GM12878 (cell line): ENCODE measurements at regions of chr9 and their contacts with region 1.

Region 1: DNA sequence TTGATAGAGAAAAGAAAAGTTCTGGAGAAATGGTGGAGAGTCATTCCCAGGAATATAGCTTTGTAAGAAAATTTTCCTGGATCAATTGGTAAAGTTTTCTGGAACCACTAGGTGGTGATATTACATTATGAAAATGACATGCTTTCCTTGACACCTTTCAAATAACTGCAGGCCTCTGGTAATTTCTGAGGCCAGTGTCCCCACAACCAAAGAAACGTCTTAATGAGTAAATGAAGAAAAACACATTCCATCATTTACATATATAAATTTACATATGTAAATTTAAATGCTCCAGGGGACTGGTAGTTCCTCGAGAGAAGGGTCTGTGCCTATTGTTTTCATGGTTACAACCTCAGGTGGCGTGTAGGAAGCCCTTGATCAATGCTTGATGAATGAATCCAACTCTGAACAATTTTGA is 17.2 kb upstream of the RGS3 start:
- DNase-seq: peak; percentile 25
- ATAC-seq: peak; percentile 80
- H3K4me3 ChIP-seq: no peak overlapping the region
- H3K27ac ChIP-seq: no peak overlapping the region
- H3K4me1 ChIP-seq: no peaks in the 10 kb centered on the region
- H3K27me3 ChIP-seq: no peaks in the 10 kb centered on the region
- CTCF ChIP-seq: peak; percentile 42 to 69 (median 50); a peak in 5 of 6 replicates
- EP300 ChIP-seq: no peak
- POLR2A ChIP-seq: no peak
- RAD21 ChIP-seq: peak; percentile 81

Region 2: DNA sequence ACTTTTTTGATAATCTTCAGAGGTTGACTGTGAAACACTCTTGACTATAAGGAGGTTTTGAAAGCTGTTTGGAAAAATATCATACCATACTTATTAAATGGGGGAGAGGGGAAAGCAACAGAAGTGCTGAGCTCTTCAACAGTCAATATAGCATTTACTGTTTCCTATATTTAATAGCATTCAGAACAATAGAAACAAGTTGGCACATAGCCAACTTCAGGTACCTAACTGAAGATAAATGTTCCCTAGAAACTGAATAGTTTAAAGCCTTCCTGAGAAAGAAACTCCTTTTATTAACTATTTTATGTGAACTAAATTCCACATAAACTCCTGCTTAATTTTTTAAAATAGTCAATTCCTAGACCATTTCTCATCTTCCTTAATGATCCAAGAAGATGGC is 198.7 kb before region 1 on chr9:
- CTCF ChIA-PET with region 1: no interaction called
- POLR2A ChIA-PET with region 1: no interaction called
- RAD21 ChIA-PET with region 1: no interaction called
- SMC1A ChIA-PET with region 1: no interaction called
- in situ Hi-C with region 1: no loop called
- intact Hi-C with region 1: no loop called
- DNase-seq: no peak
- ATAC-seq: no peak
- H3K4me3 ChIP-seq: no peak overlapping the region
- H3K27ac ChIP-seq: no peak overlapping the region
- H3K4me1 ChIP-seq: peaks cover 16% of the 10 kb centered on the region
- H3K27me3 ChIP-seq: no peaks in the 10 kb centered on the region
- CTCF ChIP-seq: no peak
- EP300 ChIP-seq: no peak
- POLR2A ChIP-seq: no peak
- RAD21 ChIP-seq: no peak

Region 3: GRCh38 chr9:113410207-113410864 is 36.0 kb before region 1 on chr9 and contains the starts of genes C9orf43 and POLE3:
- CTCF ChIA-PET with region 1: interaction called, 11 read pairs
- POLR2A ChIA-PET with region 1: no interaction called
- RAD21 ChIA-PET with region 1: interaction called, 7 read pairs
- SMC1A ChIA-PET with region 1: interaction called, 4 read pairs
- in situ Hi-C with region 1: no loop called
- intact Hi-C with region 1: no loop called
- DNase-seq: peak; percentile 80
- ATAC-seq: peak; percentile 96
- H3K4me3 ChIP-seq: peak within 1 kb of the TSS; percentile 92
- H3K27ac ChIP-seq: peak within 1 kb of the TSS; percentile 98
- H3K4me1 ChIP-seq: peaks cover 16% of the 10 kb centered on the region; the same call in 1 of the 2 replicates
- H3K27me3 ChIP-seq: no peaks in the 10 kb centered on the region
- CTCF ChIP-seq: no peak; a peak in 1 of 6 replicates
- EP300 ChIP-seq: 0 out of 4 replicates have a peak, but pooled peaks of 1 of the 2 experiments have one; percentile 15
- POLR2A ChIP-seq: peak; percentile 90
- RAD21 ChIP-seq: no peak
- polyA plus RNA-seq, gene C9orf43: 0.23 to 0.51 TPM
- polyA plus RNA-seq, gene POLE3: 40.8 to 65.9 TPM

Region 4: GRCh38 chr9:113492343-113493212 is 46.2 kb after region 1 on chr9:
- CTCF ChIA-PET with region 1: interaction called, 12 read pairs
- POLR2A ChIA-PET with region 1: no interaction called
- RAD21 ChIA-PET with region 1: no interaction called
- SMC1A ChIA-PET with region 1: interaction called, 6 read pairs
- in situ Hi-C with region 1: no loop called
- intact Hi-C with region 1: no loop called
- DNase-seq: no peak
- ATAC-seq: no peak; the same call in 2 of the 3 replicates
- H3K4me3 ChIP-seq: no peak overlapping the region
- H3K27ac ChIP-seq: no peak overlapping the region
- H3K4me1 ChIP-seq: no peaks in the 10 kb centered on the region
- H3K27me3 ChIP-seq: no peaks in the 10 kb centered on the region
- CTCF ChIP-seq: no peak
- EP300 ChIP-seq: no peak
- POLR2A ChIP-seq: no peak
- RAD21 ChIP-seq: no peak

Region 5: DNA sequence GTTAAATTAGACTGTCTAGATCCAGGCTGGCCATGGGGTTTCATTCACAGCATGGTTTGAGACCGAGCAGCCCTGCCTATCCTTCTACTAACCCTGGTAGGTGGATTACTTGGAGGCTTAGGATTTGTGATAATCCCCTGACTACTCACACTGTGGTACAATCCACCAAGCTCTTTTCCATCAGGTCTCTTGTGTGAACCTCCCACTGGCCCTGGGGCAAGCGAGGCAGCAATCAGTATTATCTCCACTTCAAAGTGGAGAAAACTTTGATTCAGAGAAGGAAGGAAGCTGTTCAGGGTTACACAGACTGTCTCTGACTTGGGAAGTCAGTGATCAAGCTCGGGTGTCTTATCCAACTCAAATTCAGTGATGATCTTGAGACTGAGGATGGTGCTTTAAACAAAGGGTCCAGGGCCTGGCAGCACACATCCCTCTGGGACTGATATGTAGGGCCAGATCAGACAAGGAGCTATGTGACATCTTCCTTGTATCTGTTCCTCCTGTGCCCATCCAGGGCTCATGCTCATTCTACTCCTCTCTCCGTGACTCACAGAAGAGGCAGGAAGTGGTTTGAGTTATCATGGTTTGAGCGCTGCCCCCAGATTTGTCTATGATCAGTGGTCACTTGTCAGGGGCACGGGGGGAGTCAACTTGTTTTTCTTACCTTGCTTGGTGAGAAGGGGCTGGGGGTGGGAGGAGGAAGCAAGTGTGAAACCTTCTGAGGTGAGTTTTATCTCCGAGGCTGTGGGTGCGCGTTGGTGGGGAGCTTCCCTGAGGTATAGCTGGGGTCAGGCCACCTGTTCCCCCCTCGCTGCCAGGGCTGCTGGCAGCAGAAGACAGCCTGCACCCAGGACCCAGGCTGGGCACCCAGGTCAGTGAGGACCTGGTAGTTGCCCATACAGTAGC is 65.8 kb after region 1 on chr9:
- CTCF ChIA-PET with region 1: interaction called, 33 read pairs
- POLR2A ChIA-PET with region 1: no interaction called
- RAD21 ChIA-PET with region 1: interaction called, 13 read pairs
- SMC1A ChIA-PET with region 1: interaction called, 23 read pairs
- in situ Hi-C with region 1: no loop called
- intact Hi-C with region 1: loop called (anchors 2 kb)
- DNase-seq: peak; percentile 81
- ATAC-seq: peak; percentile 74
- H3K4me3 ChIP-seq: peak overlapping the region; percentile 42; the same call in 1 of the 2 replicates
- H3K27ac ChIP-seq: peak overlapping the region; percentile 68
- H3K4me1 ChIP-seq: peaks cover 41% of the 10 kb centered on the region
- H3K27me3 ChIP-seq: no peaks in the 10 kb centered on the region
- CTCF ChIP-seq: no peak
- EP300 ChIP-seq: peak; percentile 7 to 84; a peak in 2 of 4 replicates
- POLR2A ChIP-seq: no peak
- RAD21 ChIP-seq: no peak

Region 6: DNA sequence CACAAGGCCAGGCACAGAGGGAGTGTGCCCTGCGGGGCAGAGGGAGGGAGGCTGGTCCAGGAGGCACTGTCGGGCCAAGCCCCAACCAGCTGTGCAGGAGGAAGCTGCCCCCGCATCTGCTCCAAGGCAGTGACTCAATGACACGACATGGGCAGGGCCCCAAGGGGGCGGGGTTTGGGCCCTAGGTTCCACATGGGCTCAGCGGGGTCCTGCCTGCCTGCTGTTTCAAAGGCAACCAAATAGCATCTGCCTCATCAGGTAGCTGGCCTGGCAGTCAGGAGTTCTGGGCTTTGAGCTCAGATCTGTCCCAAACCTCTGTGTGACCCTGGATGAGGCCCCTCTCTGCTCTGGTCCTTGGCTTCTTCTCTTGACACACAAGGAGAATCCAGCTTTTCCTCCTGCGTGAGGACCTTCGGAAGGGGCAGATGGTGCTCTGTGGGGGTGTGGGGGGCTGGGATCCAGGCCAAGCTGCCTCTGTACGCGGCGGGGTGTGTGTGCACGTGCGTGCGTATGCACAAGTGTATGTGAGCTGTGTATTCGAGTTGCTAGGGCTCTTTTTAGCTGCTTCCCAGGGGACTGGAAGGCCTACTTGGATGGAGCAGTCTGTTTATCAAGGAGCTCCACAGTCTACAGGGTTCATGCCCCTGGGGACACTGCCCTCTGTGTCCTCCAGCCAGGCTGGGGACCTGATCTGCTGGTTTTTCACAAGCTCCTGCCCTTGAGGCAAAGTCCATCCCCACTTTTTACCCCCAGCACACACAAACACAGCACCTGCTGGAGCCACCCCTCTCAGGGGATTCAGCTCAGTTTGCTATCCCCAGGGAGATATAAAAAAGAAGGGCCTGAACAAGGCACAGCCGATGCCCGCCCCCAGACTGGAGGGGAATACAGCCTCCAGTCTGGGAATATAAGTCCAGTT is 156.1 kb after region 1 on chr9:
- CTCF ChIA-PET with region 1: interaction called, 9 read pairs
- POLR2A ChIA-PET with region 1: no interaction called
- RAD21 ChIA-PET with region 1: no interaction called
- SMC1A ChIA-PET with region 1: interaction called, 13 read pairs
- in situ Hi-C with region 1: no loop called
- intact Hi-C with region 1: no loop called
- DNase-seq: no peak
- ATAC-seq: peak; percentile 86
- H3K4me3 ChIP-seq: no peak overlapping the region
- H3K27ac ChIP-seq: no peak overlapping the region
- H3K4me1 ChIP-seq: peaks cover 7% of the 10 kb centered on the region; the same call in 1 of the 2 replicates
- H3K27me3 ChIP-seq: no peaks in the 10 kb centered on the region
- CTCF ChIP-seq: no peak
- EP300 ChIP-seq: no peak
- POLR2A ChIP-seq: no peak
- RAD21 ChIP-seq: no peak